ENCODE measurements at regions of chr11 and their contacts with region 1.

Region 1: GRCh38 chr11:43311791-43312607 is at the start of gene API5:
- DNase-seq: peak; percentile 92
- ATAC-seq: peak; percentile 100
- H3K4me3 ChIP-seq: peak within 1 kb of the TSS; percentile 86
- H3K27ac ChIP-seq: peak within 1 kb of the TSS; percentile 55
- H3K4me1 ChIP-seq: peaks cover 5% of the 10 kb centered on the region
- H3K27me3 ChIP-seq: no peaks in the 10 kb centered on the region
- CTCF ChIP-seq: peak; percentile 88
- POLR2A ChIP-seq: peak; percentile 89
- RAD21 ChIP-seq: peak; percentile 54
- total RNA-seq, gene API5: 59.9 and 94.7 TPM in 2 replicates

Region 2: GRCh38 chr11:43358801-43359421 is 46.9 kb after region 1 on chr11 and contains the start of gene TTC17:
- CTCF ChIA-PET with region 1: interaction called, 3 read pairs
- POLR2A ChIA-PET with region 1: interaction called, 10 read pairs
- dilution Hi-C with region 1: no loop called
- in situ Hi-C with region 1: no loop called
- intact Hi-C with region 1: no loop called
- DNase-seq: peak; percentile 87
- ATAC-seq: peak; percentile 96
- H3K4me3 ChIP-seq: peak within 1 kb of the TSS; percentile 93
- H3K27ac ChIP-seq: peak within 1 kb of the TSS; percentile 98
- H3K4me1 ChIP-seq: peaks cover 4% of the 10 kb centered on the region; the same call in 1 of the 2 replicates
- H3K27me3 ChIP-seq: no peaks in the 10 kb centered on the region
- CTCF ChIP-seq: no peak
- POLR2A ChIP-seq: peak; percentile 97
- RAD21 ChIP-seq: 0 out of 2 replicates have a peak, but pooled peaks have one; percentile 2
- total RNA-seq, gene TTC17: 61.3 and 69.4 TPM in 2 replicates

Measured in IMR-90 (cell line).